Sciatic nerve (tissue), 2 donors: ENCODE measurements at regions of chr16 and their contacts with region 1.

Region 1: GRCh38 chr16:68085259-68086071 is at the start of gene NFATC3:
- DNase-seq: peak; percentile 99
- ATAC-seq: peak; percentile 91
- total RNA-seq, gene NFATC3: 66.4 TPM

Region 2: GRCh38 chr16:67632415-67633172 is 452.9 kb before region 1 on chr16:
- intact Hi-C with region 1: no loop called
- DNase-seq: no peak
- ATAC-seq: no peak

Region 3: DNA sequence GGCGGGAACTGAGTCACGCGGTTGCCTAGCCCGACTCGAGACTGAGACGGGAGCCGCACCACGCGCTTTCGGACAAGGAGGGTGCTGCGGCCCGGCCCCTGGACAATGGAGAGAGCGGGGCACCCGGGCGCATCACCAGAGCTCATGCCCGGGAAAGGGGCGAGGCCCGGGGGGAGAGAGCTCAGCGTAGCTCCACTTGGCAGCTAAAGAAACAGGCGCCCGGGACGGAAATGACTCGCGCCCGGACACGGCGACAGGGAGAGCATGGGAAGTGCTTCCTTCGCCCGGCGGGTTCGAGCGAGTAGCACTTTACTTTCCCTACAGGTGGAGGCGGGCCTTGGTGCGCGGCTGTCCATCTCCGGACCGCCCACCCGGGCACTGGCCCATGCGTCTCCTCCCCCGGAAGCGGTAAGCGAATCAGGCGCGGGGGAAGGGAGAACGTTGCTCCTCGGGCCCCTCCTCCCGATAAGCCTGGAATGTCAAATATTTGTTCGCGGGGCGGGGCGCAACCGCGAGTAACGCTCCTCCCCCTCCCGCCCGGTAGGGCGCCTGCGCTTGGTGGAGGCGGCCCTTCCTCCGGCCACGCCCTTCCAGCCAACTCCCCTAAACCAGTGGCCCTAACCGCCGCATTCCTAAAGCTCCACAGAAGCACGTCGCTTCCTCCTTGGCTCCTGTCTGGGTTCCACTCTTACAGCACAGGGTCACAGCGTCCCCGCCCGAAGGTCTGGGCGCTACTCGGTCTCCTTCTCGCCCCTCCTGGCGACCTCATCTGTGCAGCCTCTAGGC is 152.0 kb after region 1 on chr16:
- intact Hi-C with region 1: loop called (anchors 10 kb)
- DNase-seq: peak; percentile 98
- ATAC-seq: peak; percentile 94